Caco-2 (cell line): ENCODE measurements at regions of chr6 and their contacts with region 1.

Region 1: DNA sequence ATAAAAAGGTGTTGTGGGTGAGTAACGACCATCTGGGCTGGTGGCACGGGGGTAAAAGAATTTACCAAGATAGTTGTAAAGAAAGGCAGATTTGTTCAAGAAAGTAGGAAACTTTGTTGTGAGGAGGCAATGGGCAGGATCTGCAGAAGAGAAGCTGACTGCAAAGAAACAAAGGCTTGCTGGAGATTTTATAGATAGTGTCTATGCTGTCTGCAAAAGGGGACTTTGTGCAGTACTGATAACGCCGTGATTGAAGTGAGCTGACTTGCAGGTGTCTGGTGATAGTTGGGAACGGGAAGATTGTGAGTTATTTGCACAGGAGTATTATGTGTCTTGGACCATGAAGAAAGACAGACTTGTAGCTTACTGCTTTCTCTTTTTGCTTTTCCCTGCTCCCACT is 36.8 kb upstream of the GSTA3 start:
- DNase-seq: peak; percentile 78 to 82
- H3K4me3 ChIP-seq: no peak overlapping the region
- H3K4me3 Mint-ChIP-seq: peak overlapping the region; percentile 49
- H3K27ac Mint-ChIP-seq: peak overlapping the region; percentile 76
- H3K4me1 ChIP-seq: peaks cover 59% of the 10 kb centered on the region
- H3K4me1 Mint-ChIP-seq: peaks cover 43% of the 10 kb centered on the region
- H3K27me3 ChIP-seq: no peaks in the 10 kb centered on the region
- H3K27me3 Mint-ChIP-seq: no peaks in the 10 kb centered on the region
- CTCF ChIP-seq: no peak

Region 2: DNA sequence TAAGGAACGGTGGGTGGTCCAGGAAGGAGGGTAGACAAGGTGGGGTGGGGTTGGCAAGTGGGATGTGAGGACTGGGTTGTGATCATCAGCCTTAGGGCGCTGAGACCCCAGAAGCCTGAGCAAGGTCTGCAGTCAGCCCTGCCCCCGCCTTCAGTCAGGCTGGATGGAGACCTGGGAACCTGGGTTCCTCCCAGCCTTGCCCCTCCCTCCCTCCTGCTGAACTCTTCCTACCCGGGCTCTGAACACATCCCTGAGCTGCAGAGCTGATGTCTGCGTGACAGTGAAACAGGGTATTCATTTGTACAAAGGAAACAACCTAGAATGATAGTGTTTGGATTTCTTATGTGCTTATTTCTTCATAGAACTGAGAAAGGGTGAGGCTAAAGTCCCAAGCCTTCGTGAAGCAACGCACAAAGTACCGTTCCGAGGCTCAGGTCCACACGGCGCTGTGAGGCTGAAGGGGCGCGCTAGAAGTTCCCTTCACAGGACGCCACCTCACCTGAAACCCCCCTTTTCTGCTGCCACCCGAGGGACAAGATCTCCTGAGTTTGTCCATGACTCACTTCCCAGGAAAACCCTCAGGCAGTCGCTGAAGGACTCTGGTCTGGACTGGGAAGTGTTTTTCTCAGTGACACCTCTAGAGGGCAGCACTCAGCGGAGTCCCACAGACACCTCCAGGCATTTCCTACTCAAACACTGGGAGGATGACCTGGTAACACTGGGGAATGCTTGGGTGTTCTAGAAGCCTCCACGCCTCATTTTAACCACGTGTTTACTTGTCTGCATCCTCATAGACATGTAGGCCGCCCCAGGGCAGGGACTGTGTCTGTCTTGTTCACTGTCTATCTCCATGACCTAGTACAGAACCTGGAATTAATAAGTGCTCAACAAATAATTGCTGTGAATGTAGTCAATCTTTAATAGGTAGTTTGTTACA is 106.9 kb before region 1 on chr6:
- CTCF ChIA-PET with region 1: no interaction called
- POLR2A ChIA-PET with region 1: no interaction called
- intact Hi-C with region 1: no loop called
- DNase-seq: peak; percentile 78 to 81
- H3K4me3 ChIP-seq: no peak overlapping the region
- H3K4me3 Mint-ChIP-seq: no peak overlapping the region
- H3K27ac Mint-ChIP-seq: no peak overlapping the region
- H3K4me1 ChIP-seq: no peaks in the 10 kb centered on the region
- H3K4me1 Mint-ChIP-seq: no peaks in the 10 kb centered on the region
- H3K27me3 ChIP-seq: no peaks in the 10 kb centered on the region
- H3K27me3 Mint-ChIP-seq: no peaks in the 10 kb centered on the region
- CTCF ChIP-seq: peak; percentile 67 to 71

Region 3: GRCh38 chr6:52976591-52977035 is 30.3 kb after region 1 on chr6:
- CTCF ChIA-PET with region 1: no interaction called
- POLR2A ChIA-PET with region 1: no interaction called
- intact Hi-C with region 1: loop called (anchors 2 kb)
- DNase-seq: peak; percentile 54 to 60
- H3K4me3 ChIP-seq: no peak overlapping the region
- H3K4me3 Mint-ChIP-seq: peak overlapping the region; percentile 12
- H3K27ac Mint-ChIP-seq: peak overlapping the region; percentile 85
- H3K4me1 ChIP-seq: peaks cover 14% of the 10 kb centered on the region
- H3K4me1 Mint-ChIP-seq: peaks cover 20% of the 10 kb centered on the region
- H3K27me3 ChIP-seq: no peaks in the 10 kb centered on the region
- H3K27me3 Mint-ChIP-seq: no peaks in the 10 kb centered on the region
- CTCF ChIP-seq: no peak